Motor neuron (in vitro differentiated cells): ENCODE measurements at regions of chr7 and their contacts with region 1.

Region 1: GRCh38 chr7:93231799-93232672 is at the start of gene VPS50:
- ATAC-seq: peak; percentile 99 to 100 (median 100)
- H3K4me3 ChIP-seq: peak within 1 kb of the TSS; percentile 58 to 85 (median 69)
- H3K27ac ChIP-seq: peak within 1 kb of the TSS in 1 of 2 donors; percentile 43
- H3K4me1 ChIP-seq: peaks cover 0 to 11% of the 10 kb centered on the region in 2 donors
- total RNA-seq, gene VPS50: 17.5 to 28.7 (median 21.3) TPM

Region 2: GRCh38 chr7:92547579-92547978 is 684.5 kb before region 1 on chr7:
- in situ Hi-C with region 1: no loop called
- ATAC-seq: no peak
- H3K4me3 ChIP-seq: no peak overlapping the region
- H3K27ac ChIP-seq: no peak overlapping the region
- H3K4me1 ChIP-seq: no peaks in the 10 kb centered on the region

Region 3: DNA sequence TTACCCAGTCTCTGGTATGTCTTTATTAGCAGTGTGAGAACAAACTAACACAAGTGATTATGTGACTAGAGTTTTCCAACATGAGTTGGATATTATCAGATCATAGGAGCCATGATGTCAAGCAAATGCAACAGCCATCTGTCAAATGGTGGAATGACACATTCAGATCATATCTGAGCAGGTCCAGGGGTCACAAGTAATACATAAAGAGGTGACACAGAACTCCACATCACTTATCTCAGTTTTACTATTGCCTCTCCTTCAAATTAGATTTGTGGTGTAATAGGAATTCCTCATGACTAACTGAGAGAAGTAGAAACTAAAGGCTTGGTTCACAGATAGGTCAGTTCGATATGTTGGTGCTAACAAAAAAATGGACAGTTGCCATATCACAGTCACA is 71.6 kb before region 1 on chr7:
- in situ Hi-C with region 1: no loop called
- ATAC-seq: no peak
- H3K4me3 ChIP-seq: no peak overlapping the region
- H3K27ac ChIP-seq: no peak overlapping the region
- H3K4me1 ChIP-seq: no peaks in the 10 kb centered on the region

Region 4: GRCh38 chr7:93178212-93178611 is 53.8 kb before region 1 on chr7:
- in situ Hi-C with region 1: loop called in 1 of 9 experiments (anchors 10 kb)
- ATAC-seq: peak in 3 of 8 experiments; percentile 80 to 87 (median 86)
- H3K4me3 ChIP-seq: no peak overlapping the region
- H3K27ac ChIP-seq: no peak overlapping the region
- H3K4me1 ChIP-seq: no peaks in the 10 kb centered on the region

Region 5: DNA sequence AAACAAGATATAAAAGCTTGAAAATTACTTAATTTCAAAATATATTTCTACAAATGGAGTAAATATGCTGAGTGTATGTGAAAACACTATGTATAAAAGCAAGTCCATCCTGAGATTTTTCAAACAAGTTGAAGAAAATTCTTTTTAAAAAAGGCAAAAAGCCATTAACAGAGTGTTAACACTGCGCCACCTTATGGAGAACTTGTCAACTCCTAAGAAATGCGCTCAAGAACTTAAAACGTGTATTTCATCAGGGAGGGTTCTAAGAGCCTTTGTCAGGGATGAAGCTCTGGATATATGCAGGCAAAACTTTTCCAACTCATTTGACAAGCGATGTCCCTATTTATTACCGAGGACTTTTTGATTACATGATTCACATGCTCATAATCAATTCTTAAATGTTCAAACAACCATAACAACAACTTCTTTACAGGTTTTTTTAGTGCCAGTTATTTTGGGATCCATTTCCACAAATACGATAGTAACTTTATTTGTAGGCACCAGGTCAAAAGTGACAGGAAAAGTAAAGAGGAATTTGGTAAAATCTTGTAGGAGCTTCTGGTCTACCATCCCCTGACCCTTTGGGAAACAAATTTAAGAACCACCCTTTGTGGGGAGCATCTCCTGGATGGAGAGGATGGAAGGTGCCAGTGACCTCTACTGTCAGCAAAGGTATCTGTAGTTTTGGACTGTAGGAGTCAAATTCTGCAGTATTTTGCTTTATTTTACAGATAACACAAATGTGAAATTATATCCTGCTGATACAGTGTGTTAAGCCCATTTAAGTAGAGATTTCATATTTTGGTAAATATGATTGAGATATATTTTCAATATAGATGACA is 319.2 kb after region 1 on chr7:
- in situ Hi-C with region 1: loop called in 2 of 9 experiments (anchors 25 kb)
- ATAC-seq: peak in 3 of 8 experiments; percentile 33 to 60 (median 38)
- H3K4me3 ChIP-seq: no peak overlapping the region
- H3K27ac ChIP-seq: no peak overlapping the region
- H3K4me1 ChIP-seq: no peaks in the 10 kb centered on the region